ENCODE measurements at regions of chr1 and their contacts with region 1.

Region 1: GRCh38 chr1:204791453-204792353 is 79.0 kb upstream of the NFASC start:
- DNase-seq: peak; percentile 63 to 88 (median 80)
- ATAC-seq: peak; percentile 88
- H3K4me3 ChIP-seq: no peak overlapping the region
- H3K4me3 Mint-ChIP-seq: no peak overlapping the region
- H3K27ac ChIP-seq: no peak overlapping the region
- H3K27ac Mint-ChIP-seq: no peak overlapping the region
- H3K4me1 ChIP-seq: no peaks in the 10 kb centered on the region
- H3K4me1 Mint-ChIP-seq: no peaks in the 10 kb centered on the region
- H3K27me3 ChIP-seq: peaks cover 0 to 2% of the 10 kb centered on the region in 2 experiments
- H3K27me3 Mint-ChIP-seq: peaks cover 26% of the 10 kb centered on the region
- CTCF ChIP-seq: peak; percentile 83

Region 2: DNA sequence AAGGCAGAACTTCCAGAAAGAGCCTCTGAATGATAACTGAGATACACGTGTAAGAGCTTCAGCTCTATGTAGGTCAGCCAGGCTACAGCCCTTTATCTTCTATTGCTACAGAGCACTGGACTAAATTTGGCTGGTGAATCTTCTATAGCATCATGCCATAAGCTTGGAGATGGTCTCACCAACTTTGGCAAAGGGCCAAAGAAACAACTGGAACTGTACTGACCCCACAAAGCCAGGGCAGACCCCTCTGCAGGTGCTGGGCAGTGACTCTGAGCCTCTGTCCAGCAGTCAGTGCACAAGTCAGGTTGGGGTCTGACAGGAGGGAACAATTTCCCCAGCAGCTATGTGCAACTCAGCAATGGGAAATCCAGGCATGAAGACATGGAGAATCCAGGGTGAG is 21.1 kb after region 1 on chr1:
- CTCF ChIA-PET with region 1: interaction called, 135 read pairs
- POLR2A ChIA-PET with region 1: no interaction called
- intact Hi-C with region 1: no loop called
- DNase-seq: no peak
- ATAC-seq: no peak
- H3K4me3 ChIP-seq: no peak overlapping the region
- H3K4me3 Mint-ChIP-seq: no peak overlapping the region
- H3K27ac ChIP-seq: no peak overlapping the region
- H3K27ac Mint-ChIP-seq: no peak overlapping the region
- H3K4me1 ChIP-seq: no peaks in the 10 kb centered on the region
- H3K4me1 Mint-ChIP-seq: no peaks in the 10 kb centered on the region
- H3K27me3 ChIP-seq: peaks cover 0 to 2% of the 10 kb centered on the region in 2 experiments
- H3K27me3 Mint-ChIP-seq: peaks cover 22% of the 10 kb centered on the region
- CTCF ChIP-seq: no peak

Region 3: DNA sequence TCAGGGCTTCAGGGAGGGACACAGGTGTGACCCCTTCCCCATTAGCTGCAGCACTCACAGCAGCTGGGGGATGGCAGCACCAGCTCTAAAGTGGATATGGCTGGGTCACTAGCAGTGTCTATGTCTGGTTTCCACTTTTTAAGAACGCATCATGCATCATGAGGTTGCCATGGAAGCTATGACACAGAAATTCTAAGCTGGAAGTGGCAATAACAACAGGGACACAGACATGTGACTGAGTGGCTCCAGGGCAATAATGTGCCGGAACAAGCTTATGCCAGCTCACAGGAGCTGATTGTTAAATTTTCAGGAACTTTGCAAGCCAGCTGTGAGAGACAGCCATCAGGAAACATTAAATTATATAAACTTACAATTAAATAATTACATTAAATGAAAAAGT is 27.8 kb after region 1 on chr1:
- CTCF ChIA-PET with region 1: interaction called, 17 read pairs
- POLR2A ChIA-PET with region 1: no interaction called
- intact Hi-C with region 1: no loop called
- DNase-seq: no peak
- ATAC-seq: no peak
- H3K4me3 ChIP-seq: no peak overlapping the region
- H3K4me3 Mint-ChIP-seq: no peak overlapping the region
- H3K27ac ChIP-seq: no peak overlapping the region
- H3K27ac Mint-ChIP-seq: no peak overlapping the region
- H3K4me1 ChIP-seq: no peaks in the 10 kb centered on the region
- H3K4me1 Mint-ChIP-seq: no peaks in the 10 kb centered on the region
- H3K27me3 ChIP-seq: peaks cover 0 to 2% of the 10 kb centered on the region in 2 experiments
- H3K27me3 Mint-ChIP-seq: peaks cover 22% of the 10 kb centered on the region
- CTCF ChIP-seq: no peak

Region 4: GRCh38 chr1:204868340-204868700 is 76.6 kb after region 1 on chr1:
- CTCF ChIA-PET with region 1: no interaction called
- POLR2A ChIA-PET with region 1: no interaction called
- intact Hi-C with region 1: no loop called
- DNase-seq: no peak
- ATAC-seq: no peak
- H3K4me3 ChIP-seq: no peak overlapping the region
- H3K4me3 Mint-ChIP-seq: no peak overlapping the region
- H3K27ac ChIP-seq: no peak overlapping the region
- H3K27ac Mint-ChIP-seq: no peak overlapping the region
- H3K4me1 ChIP-seq: no peaks in the 10 kb centered on the region
- H3K4me1 Mint-ChIP-seq: no peaks in the 10 kb centered on the region
- H3K27me3 ChIP-seq: no peaks in the 10 kb centered on the region
- H3K27me3 Mint-ChIP-seq: peaks cover 19% of the 10 kb centered on the region
- CTCF ChIP-seq: no peak

Region 5: DNA sequence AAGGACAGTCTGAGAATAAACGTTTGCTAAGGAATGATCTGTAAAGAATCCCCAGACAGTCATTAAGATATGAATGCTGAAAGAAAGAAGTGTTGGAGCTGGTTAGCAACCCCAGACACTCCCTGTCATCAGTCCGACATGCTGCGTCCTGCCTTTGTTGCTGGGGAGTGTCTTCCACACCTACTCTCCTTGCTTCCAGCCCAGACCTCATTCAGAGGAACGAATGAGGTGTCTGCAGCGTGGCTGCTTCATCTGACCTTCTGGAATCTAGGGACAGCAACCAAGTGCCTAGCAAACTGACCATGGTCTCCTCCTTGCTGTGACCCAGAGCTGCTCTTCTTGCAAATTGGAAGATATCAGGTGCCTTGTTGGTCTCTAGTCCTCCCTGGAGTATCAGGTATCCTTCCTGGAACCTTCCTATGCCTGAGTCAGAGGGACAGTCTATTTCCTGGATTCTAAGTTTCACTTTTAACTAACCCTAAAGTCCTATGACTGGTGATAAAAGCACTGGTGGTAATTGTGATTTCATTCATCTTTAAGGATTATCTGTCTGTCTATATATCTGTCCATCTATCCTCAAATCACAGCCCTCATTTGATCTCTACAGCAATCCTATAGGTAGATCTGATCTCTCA is 124.3 kb after region 1 on chr1:
- CTCF ChIA-PET with region 1: no interaction called
- POLR2A ChIA-PET with region 1: no interaction called
- intact Hi-C with region 1: no loop called
- DNase-seq: no peak
- ATAC-seq: no peak
- H3K4me3 ChIP-seq: no peak overlapping the region
- H3K4me3 Mint-ChIP-seq: no peak overlapping the region
- H3K27ac ChIP-seq: no peak overlapping the region
- H3K27ac Mint-ChIP-seq: no peak overlapping the region
- H3K4me1 ChIP-seq: no peaks in the 10 kb centered on the region
- H3K4me1 Mint-ChIP-seq: no peaks in the 10 kb centered on the region
- H3K27me3 ChIP-seq: no peaks in the 10 kb centered on the region
- H3K27me3 Mint-ChIP-seq: peaks cover 22% of the 10 kb centered on the region
- CTCF ChIP-seq: no peak

Measured in CD8-positive, alpha-beta T cell (primary cell).